Activated CD4-positive, alpha-beta memory T cell treated with anti-CD3 and anti-CD28 coated beads, Interleukin-2, amount 10 ng/mL, durations not matched to agents 7 days and 5 days (primary cell): ENCODE measurements at regions of chr12 and their contacts with region 1.

Region 1: GRCh38 chr12:751192-751998 is 984 bp upstream of the WNK1 start:
- DNase-seq: peak; percentile 93
- H3K4me3 Mint-ChIP-seq: no peak overlapping the region
- H3K27ac Mint-ChIP-seq: no peak overlapping the region
- H3K4me1 Mint-ChIP-seq: peaks cover 26% of the 10 kb centered on the region
- H3K27me3 Mint-ChIP-seq: no peaks in the 10 kb centered on the region

Region 2: DNA sequence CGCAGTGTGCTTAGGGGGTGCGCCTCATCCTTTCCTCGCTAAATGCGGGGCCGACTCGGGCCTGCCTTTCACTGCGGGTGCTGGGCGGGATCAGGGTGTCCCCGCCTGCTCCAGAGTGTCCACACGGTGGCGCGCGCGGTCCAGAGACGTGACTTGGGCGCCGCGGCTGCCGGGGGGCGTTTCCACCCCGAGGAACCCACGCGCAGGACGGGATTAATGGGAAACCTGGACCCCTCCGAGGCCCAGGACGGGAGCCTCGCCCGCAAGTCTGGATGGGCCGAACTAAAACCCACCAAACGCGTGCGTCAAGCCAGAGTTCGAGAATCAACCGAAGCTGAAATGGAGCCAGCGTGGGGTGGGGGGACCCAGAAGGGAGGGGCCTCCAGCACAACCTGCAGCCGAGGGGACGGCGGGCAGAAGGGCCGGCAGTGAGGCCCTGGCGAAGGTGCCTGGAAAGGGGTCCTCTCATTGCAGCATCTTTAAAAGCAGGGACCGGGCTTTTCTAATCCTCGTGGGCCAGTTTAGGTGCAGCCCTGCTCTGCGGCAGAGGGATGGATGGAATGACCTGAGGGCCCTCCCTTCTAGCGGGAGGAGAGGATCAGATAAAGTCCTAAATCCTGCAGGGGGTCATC is 181.5 kb before region 1 on chr12:
- CTCF ChIA-PET with region 1: interaction called, 118 read pairs
- POLR2A ChIA-PET with region 1: interaction called, 64 read pairs
- DNase-seq: peak; percentile 87
- H3K4me3 Mint-ChIP-seq: peak overlapping the region; percentile 78
- H3K27ac Mint-ChIP-seq: peak overlapping the region; percentile 10
- H3K4me1 Mint-ChIP-seq: peaks cover 78% of the 10 kb centered on the region
- H3K27me3 Mint-ChIP-seq: no peaks in the 10 kb centered on the region

Region 3: GRCh38 chr12:614411-614970 is 136.9 kb before region 1 on chr12:
- CTCF ChIA-PET with region 1: interaction called, 42 read pairs
- POLR2A ChIA-PET with region 1: interaction called, 12 read pairs
- DNase-seq: no peak
- H3K4me3 Mint-ChIP-seq: no peak overlapping the region
- H3K27ac Mint-ChIP-seq: no peak overlapping the region
- H3K4me1 Mint-ChIP-seq: peaks cover 50% of the 10 kb centered on the region
- H3K27me3 Mint-ChIP-seq: no peaks in the 10 kb centered on the region

Region 4: DNA sequence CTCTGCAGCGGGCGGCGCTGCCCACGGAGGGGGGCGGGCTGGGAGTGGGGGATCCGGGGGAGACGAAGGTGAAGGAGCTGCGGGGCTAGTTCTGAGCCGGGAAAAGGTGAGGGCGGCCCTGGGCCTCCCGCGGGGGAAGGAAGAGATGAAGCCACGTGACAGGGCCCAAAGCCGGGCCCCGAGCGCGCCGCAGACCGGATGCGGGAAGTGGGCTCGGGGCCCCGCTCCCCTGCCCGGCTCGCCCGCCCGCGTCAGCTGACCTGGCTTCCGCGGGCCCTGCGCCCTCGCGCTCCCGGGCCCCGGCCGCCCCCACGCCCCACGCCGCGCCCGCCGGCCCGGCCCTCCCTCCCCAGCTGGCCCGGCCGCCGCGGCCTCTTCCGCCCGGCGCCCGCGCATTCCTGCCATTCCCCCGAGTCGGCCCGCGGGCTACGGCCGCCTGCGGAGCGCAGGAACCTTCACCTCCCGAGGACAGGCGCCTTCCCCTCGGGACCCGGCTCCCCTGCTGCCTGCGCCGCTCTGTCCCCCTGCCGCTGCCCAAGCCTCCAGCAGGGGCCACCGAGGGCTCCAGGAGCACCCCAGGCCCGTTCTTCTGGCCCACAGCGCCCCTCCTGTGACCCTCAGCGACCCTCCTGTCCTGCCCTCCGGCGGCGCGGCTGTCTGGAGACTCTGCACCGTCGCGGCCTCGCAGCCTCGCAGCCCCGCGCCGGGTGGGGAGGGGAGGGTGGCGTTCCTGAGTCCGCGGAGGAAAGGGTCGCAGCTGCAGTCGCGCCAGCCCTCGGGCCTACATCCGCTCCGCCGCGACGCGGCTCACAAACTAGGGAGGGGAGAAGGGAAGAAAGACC is 108.5 kb before region 1 on chr12:
- CTCF ChIA-PET with region 1: interaction called, 39 read pairs
- POLR2A ChIA-PET with region 1: interaction called, 69 read pairs
- DNase-seq: peak; percentile 87
- H3K4me3 Mint-ChIP-seq: peak overlapping the region; percentile 84
- H3K27ac Mint-ChIP-seq: peak overlapping the region; percentile 94
- H3K4me1 Mint-ChIP-seq: peaks cover 64% of the 10 kb centered on the region
- H3K27me3 Mint-ChIP-seq: no peaks in the 10 kb centered on the region

Region 5: DNA sequence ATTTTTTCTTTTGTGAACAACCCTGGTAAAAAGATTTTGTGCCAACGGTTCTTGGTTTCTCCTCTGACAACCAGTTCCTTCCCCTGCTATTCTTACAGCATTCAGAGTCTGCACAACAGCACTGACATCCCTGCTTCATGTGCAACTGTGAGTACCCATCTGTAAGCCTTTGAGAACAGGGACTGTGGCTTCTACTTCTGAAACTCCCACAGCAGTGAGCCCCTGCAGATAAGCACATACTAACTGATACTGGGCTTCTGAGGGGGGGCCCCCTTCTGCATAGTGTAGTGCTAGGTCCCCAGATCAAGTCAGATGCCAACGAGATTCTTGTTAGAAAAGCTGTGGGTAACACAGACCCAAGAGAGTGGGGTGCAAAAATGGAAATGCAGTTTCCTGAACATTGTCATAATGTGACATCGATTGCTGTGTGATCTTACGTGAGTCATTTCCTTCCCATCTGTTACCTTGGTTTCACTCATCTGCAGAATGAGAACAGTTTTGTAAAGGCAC is 77.1 kb before region 1 on chr12:
- CTCF ChIA-PET with region 1: interaction called, 58 read pairs
- POLR2A ChIA-PET with region 1: interaction called, 83 read pairs
- DNase-seq: peak; percentile 78
- H3K4me3 Mint-ChIP-seq: peak overlapping the region; percentile 63
- H3K27ac Mint-ChIP-seq: peak overlapping the region; percentile 99
- H3K4me1 Mint-ChIP-seq: peaks cover 71% of the 10 kb centered on the region
- H3K27me3 Mint-ChIP-seq: no peaks in the 10 kb centered on the region

Region 6: DNA sequence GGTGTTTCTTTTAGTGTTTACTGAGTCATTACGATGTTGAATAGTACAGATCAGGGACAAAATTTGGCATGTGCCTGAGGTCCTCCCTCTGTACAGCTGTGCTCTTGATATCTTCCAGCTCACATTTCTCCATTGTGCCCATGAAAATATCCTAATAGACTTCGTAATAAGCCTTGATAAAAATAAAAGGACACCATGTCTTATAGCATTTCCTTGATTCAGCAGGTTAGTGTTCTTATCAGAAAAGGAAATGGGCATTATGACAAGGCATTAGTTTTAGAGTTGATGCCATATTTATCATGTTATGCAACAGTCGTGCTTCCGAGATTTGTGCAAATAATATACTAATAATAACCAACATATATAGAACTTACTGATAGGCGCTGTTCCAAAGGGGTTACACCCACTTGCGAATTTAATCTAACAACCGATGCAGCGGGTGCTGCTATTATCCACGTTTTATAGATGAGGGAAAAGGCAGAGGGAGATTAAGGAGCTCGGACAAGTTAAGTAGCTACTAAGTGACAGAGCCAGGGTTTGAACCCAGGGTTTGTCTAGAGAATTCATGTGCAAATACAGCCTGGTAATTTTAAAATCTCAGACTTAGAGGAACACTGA is 14.2 kb before region 1 on chr12:
- CTCF ChIA-PET with region 1: interaction called, 31 read pairs
- POLR2A ChIA-PET with region 1: interaction called, 23 read pairs
- DNase-seq: no peak
- H3K4me3 Mint-ChIP-seq: no peak overlapping the region
- H3K27ac Mint-ChIP-seq: no peak overlapping the region
- H3K4me1 Mint-ChIP-seq: peaks cover 8% of the 10 kb centered on the region
- H3K27me3 Mint-ChIP-seq: no peaks in the 10 kb centered on the region